PC-3 (cell line): ENCODE measurements at regions of chr3 and their contacts with region 1.

Region 1: DNA sequence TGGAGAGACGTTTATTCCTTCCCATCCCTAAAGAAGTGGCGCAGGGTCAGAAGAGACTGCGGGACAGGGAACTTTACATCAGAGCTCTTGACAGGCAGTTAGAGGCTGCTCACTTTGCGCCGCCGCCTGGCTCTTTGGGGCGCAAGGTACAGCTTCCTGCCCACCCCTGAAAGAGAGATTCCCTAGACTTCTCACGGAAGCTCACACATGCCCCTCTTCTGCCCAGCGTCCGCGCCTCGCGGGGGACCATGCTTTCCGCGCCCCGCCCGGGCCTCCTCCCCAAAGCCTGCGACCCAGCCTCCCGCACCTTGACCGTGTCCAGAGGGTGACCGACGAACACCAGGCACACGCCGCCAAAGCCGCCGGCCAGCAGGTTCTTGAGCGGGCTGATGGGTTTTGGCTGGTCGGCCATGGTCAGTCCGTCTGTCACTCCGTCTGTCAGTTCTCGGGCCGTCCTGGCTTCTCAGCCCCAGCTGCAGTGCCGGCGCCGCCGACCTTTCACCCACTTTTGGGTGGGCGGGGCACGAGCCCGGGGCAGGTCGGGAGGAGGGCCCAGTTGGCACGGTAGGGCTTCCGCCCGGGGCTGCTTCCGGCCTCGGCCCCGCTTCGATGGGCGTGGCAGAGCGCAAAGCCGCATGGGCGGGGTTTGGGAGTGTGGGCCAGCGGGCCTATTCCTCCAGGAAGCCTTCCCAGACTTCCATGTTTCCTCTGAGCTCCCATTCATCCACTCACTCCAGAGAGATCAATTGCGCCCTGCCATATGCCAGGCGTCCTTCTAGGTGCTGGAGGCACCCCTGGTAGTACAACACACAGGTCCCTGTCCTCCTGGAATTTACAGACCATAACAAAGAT is at the start of gene SLC25A20:
- DNase-seq: peak; percentile 94
- ATAC-seq: peak; percentile 90
- H3K4me3 ChIP-seq: peak within 1 kb of the TSS; percentile 74
- H3K27ac ChIP-seq: 0 out of 2 replicates have a peak within 1 kb of the TSS, but pooled peaks have one; percentile 6
- H3K4me1 ChIP-seq: peaks cover 13% of the 10 kb centered on the region
- H3K27me3 ChIP-seq: no peaks in the 10 kb centered on the region
- CTCF ChIP-seq: no peak
- total RNA-seq, gene SLC25A20: 17.7 and 19.0 TPM in 2 replicates

Region 2: GRCh38 chr3:48514436-48515227 is 384.0 kb before region 1 on chr3:
- CTCF ChIA-PET with region 1: no interaction called
- POLR2A ChIA-PET with region 1: no interaction called
- intact Hi-C with region 1: no loop called
- DNase-seq: no peak
- ATAC-seq: no peak
- H3K4me3 ChIP-seq: no peak overlapping the region
- H3K27ac ChIP-seq: no peak overlapping the region
- H3K4me1 ChIP-seq: no peaks in the 10 kb centered on the region
- H3K27me3 ChIP-seq: no peaks in the 10 kb centered on the region
- CTCF ChIP-seq: no peak

Region 3: DNA sequence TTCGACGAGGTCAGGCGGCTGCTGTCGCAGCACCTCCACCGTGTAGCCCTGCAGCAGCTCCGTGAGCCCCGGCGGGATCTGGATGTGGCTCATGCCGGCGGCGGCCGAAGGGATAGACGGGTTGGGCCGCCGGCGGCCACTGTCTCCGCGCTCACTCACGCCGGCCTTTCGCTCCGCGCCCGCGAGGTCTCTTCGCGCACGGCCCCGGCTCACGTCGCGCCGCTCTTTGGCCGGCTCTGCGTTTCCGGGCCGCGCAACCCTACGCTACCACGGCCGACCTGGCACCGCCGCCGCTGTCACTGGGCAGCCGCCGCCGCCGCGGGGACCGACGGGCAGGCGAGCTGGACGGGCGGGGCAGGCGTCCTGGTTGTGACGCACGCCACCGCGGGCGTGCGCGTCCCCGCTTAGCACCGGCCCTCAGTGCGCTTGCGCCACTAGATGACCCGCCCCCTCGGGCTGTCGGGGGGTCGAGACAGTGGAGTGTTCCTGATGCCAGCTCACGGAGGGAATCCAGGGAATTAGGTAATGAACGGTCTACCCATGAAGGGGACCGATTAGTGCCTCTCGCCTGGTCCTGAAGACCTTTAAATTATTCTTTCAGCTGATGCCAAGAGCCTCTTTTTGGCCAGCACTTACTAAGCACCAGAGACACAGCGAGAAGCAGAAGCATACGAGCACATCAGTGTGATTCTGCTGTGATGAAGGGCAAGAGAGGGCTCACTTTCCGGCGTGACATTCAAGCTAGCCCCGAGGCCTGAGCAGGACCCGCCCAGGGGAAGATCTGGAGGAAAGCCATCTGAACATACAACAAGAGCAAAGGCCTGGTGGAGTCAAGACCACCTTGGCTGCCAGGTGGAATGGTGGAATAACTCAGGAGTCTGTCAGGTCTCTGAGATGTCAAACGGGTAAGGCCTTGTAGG is 50.8 kb before region 1 on chr3 and contains the start of gene PRKAR2A:
- CTCF ChIA-PET with region 1: no interaction called
- POLR2A ChIA-PET with region 1: no interaction called
- intact Hi-C with region 1: loop called (anchors 2 kb)
- DNase-seq: peak; percentile 93
- ATAC-seq: peak; percentile 87
- H3K4me3 ChIP-seq: peak within 1 kb of the TSS; percentile 76
- H3K27ac ChIP-seq: peak within 1 kb of the TSS; percentile 69
- H3K4me1 ChIP-seq: peaks cover 7% of the 10 kb centered on the region
- H3K27me3 ChIP-seq: no peaks in the 10 kb centered on the region
- CTCF ChIP-seq: no peak
- total RNA-seq, gene PRKAR2A: 68.1 and 117 TPM in 2 replicates

Region 4: DNA sequence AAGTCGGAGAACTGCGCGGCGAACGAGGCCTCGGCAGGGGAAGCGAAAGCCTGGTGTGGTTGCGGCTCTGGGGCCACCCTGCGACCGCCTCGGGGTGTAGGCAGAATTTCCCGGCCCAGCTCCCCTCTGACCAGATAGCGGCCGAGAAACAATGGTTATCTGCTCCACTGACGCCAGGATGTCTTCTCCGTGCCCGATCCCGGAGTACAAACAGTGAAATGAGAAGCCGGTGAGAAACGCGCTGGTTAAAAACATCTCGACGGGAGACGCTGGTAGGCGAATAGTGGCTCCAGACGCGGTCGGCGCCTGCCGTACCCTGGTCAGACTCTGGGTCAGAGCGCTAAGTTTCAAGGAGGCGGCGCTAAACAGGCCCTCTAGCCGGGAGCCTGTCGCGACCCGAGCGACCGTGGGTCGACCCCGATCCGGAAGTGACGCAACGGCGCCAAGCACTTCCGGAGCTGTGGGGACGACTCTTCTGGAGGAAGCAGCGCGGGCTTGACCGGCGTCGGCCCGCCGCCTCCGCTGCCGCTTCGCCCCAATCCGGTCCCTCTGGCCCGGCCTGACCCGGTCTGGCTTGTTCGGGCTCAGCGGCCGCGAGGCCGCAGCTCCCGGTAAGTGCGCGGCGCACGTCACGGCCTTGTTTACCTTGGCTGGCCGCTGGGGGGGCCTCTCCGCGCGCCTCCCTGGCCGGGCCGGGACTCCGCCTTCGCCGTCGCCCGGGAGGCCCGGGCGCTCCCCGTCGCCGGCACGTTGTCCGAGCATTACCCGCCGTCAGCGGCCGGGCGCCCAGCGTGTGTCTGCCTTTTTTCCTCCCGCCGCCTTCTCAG is 20.0 kb after region 1 on chr3 and contains the start of gene ARIH2:
- CTCF ChIA-PET with region 1: no interaction called
- POLR2A ChIA-PET with region 1: interaction called, 3 read pairs
- intact Hi-C with region 1: loop called (anchors 1 kb)
- DNase-seq: peak; percentile 95
- ATAC-seq: peak; percentile 95
- H3K4me3 ChIP-seq: peak within 1 kb of the TSS; percentile 95
- H3K27ac ChIP-seq: peak within 1 kb of the TSS; percentile 71
- H3K4me1 ChIP-seq: peaks cover 13% of the 10 kb centered on the region
- H3K27me3 ChIP-seq: no peaks in the 10 kb centered on the region
- CTCF ChIP-seq: peak; percentile 14; the same call in 1 of the 2 replicates
- total RNA-seq, gene ARIH2: 136 and 156 TPM in 2 replicates

Region 5: DNA sequence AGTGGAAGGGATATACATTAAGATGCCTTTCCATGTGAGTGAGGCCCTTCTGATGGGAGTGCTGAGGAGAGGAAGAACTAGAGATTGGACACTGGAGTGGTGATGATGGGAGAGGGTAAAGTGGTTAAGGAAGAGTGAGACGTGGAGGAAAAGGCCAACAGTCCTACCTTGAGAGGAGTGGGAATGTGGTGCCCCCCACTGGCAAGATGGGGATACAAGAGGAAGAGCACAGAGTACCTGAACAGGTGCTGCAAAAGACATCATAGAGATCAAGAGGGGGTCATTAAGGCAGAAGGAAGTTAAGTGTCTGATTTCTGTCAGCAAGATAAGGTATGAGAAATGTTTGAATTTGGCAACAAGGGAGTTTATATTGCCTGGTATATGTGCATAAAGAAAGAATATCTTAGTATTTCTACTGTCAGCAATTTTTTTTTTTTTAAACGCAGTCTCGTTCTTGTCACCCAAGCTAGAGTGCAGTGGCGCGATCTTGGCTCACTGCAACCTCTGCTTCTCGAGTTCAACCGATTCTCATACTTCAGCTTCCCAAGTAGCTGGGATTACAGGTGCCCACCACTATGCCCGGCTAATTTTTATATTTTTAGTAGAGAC is 54.0 kb after region 1 on chr3:
- CTCF ChIA-PET with region 1: no interaction called
- POLR2A ChIA-PET with region 1: no interaction called
- intact Hi-C with region 1: loop called (anchors 10 kb)
- DNase-seq: peak; percentile 59
- ATAC-seq: peak; percentile 89
- H3K4me3 ChIP-seq: no peak overlapping the region
- H3K27ac ChIP-seq: no peak overlapping the region
- H3K4me1 ChIP-seq: no peaks in the 10 kb centered on the region
- H3K27me3 ChIP-seq: no peaks in the 10 kb centered on the region
- CTCF ChIP-seq: peak; percentile 84